Panc1 (cell line): ENCODE measurements at regions of chr14 and their contacts with region 1.

Region 1: DNA sequence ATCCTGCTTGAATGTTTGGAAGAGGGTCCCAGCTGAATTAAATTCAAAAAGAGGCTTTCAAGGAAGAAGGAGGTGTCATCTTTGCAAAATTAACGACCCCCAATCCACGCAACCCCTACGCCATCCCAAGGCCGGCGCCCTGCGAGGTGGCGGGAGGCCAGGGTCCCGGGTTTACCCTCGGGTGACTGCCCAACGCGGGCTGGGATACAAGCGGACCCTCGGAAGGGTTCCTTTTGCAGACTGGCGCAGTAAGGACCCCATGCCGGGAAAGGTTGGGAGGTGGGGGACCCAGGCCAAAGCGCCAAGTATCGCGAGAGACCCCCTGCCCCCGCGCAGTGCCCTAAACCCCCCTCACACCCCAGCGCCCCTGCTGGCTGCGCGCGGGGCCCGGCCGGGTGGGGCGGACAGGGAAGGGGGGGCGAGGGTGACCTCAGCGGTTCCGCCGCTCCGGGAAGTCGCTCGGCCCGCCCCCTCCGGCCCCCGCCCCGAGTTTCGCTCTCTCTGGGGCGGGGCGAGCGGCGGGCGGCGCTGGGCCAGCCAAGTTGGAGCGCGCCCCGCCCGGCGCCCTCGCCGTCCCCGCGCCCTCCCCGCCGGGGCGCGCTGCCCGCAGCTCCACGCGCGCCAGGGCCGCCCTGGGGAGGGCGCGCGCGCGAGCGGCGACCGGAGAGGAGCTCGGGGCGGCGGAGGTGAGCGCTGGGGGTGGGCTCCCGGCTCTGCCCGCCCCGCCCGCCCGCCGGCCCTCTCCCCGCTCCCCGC is 708 bp upstream of the ZBTB42 start:
- DNase-seq: no peak
- ATAC-seq: peak; percentile 49
- H3K4me3 ChIP-seq: peak overlapping the region; percentile 56 to 64
- H3K27ac ChIP-seq: peak overlapping the region; percentile 84
- H3K4me1 ChIP-seq: peaks cover 74% of the 10 kb centered on the region
- H3K27me3 ChIP-seq: no peaks in the 10 kb centered on the region
- CTCF ChIP-seq: peak; percentile 28; the same call in 1 of the 2 replicates

Region 2: GRCh38 chr14:104692261-104692940 is 107.8 kb before region 1 on chr14:
- CTCF ChIA-PET with region 1: no interaction called
- POLR2A ChIA-PET with region 1: interaction called, 18 read pairs
- in situ Hi-C with region 1: no loop called
- intact Hi-C with region 1: no loop called
- DNase-seq: no peak
- ATAC-seq: no peak
- H3K4me3 ChIP-seq: peak overlapping the region; percentile 73 to 78
- H3K27ac ChIP-seq: peak overlapping the region; percentile 88
- H3K4me1 ChIP-seq: peaks cover 64% of the 10 kb centered on the region
- H3K27me3 ChIP-seq: no peaks in the 10 kb centered on the region
- CTCF ChIP-seq: no peak